Panc1 (cell line): ENCODE measurements at regions of chr9 and their contacts with region 1.

Region 1: DNA sequence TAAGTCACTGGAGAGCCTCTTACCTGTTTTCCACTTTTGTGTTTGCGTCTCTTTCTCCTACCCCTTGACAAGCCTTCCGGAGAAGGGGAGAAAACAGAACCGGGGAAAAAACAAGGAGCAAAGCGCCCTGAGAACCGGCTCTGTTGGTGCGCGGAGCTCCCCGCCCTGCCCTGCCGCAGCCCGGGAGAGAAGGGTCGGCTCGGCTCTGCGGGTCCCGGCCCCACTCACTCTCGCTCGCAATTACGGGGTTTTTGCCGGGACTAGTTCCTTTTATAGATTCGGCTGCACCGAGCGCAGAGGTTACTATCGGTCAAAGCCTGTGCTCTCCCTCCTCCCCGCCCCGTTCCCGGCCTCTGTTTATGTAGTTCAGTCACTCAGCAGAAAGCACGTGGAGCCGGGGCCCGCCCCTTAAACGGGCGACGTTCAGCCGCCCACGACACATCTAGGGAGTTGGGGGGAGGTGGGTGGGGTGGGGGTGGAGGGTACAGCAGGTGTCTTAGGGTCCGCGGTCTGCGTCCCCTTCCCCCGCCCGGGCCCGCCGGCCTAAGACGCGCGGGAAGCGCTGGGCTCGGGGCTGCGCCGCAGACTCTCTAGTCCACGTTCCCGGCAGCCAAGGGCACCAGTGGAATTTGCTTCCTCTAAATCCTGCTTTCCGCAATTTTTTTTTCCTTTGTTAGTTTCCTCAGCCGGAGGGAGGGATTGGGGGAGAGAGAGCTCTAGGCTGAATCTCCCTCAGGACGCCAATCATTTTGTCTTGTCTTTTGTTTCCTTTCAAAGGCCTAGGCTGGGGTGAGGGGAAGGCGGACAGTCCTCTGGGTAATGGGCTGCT is at the start of gene ABCA1:
- DNase-seq: no peak
- ATAC-seq: peak; percentile 76
- H3K4me3 ChIP-seq: peak within 1 kb of the TSS; percentile 52 to 85
- H3K27ac ChIP-seq: no peak within 1 kb of the TSS
- H3K4me1 ChIP-seq: no peaks in the 10 kb centered on the region
- H3K27me3 ChIP-seq: no peaks in the 10 kb centered on the region
- CTCF ChIP-seq: no peak
- total RNA-seq, gene ABCA1: 2.6 TPM

Region 2: GRCh38 chr9:104765138-104765537 is 163.0 kb before region 1 on chr9:
- CTCF ChIA-PET with region 1: no interaction called
- POLR2A ChIA-PET with region 1: no interaction called
- in situ Hi-C with region 1: no loop called
- intact Hi-C with region 1: no loop called
- DNase-seq: no peak
- ATAC-seq: no peak
- H3K4me3 ChIP-seq: no peak overlapping the region
- H3K27ac ChIP-seq: no peak overlapping the region
- H3K4me1 ChIP-seq: no peaks in the 10 kb centered on the region
- H3K27me3 ChIP-seq: no peaks in the 10 kb centered on the region
- CTCF ChIP-seq: no peak

Region 3: GRCh38 chr9:104784098-104784497 is 144.0 kb before region 1 on chr9:
- CTCF ChIA-PET with region 1: no interaction called
- POLR2A ChIA-PET with region 1: no interaction called
- in situ Hi-C with region 1: no loop called
- intact Hi-C with region 1: no loop called
- DNase-seq: no peak
- ATAC-seq: no peak
- H3K4me3 ChIP-seq: no peak overlapping the region
- H3K27ac ChIP-seq: no peak overlapping the region
- H3K4me1 ChIP-seq: no peaks in the 10 kb centered on the region
- H3K27me3 ChIP-seq: no peaks in the 10 kb centered on the region
- CTCF ChIP-seq: no peak

Region 4: GRCh38 chr9:104868687-104869404 is 59.3 kb before region 1 on chr9:
- CTCF ChIA-PET with region 1: interaction called, 12 read pairs
- POLR2A ChIA-PET with region 1: no interaction called
- in situ Hi-C with region 1: no loop called
- intact Hi-C with region 1: no loop called
- DNase-seq: no peak
- ATAC-seq: peak; percentile 56; the same call in 1 of the 2 replicates
- H3K4me3 ChIP-seq: no peak overlapping the region
- H3K27ac ChIP-seq: no peak overlapping the region
- H3K4me1 ChIP-seq: no peaks in the 10 kb centered on the region
- H3K27me3 ChIP-seq: no peaks in the 10 kb centered on the region
- CTCF ChIP-seq: no peak

Region 5: GRCh38 chr9:105150991-105151685 is 223.0 kb after region 1 on chr9:
- CTCF ChIA-PET with region 1: interaction called, 10 read pairs
- POLR2A ChIA-PET with region 1: no interaction called
- in situ Hi-C with region 1: no loop called
- intact Hi-C with region 1: loop called (anchors 2 kb)
- DNase-seq: no peak
- ATAC-seq: no peak
- H3K4me3 ChIP-seq: no peak overlapping the region
- H3K27ac ChIP-seq: no peak overlapping the region
- H3K4me1 ChIP-seq: no peaks in the 10 kb centered on the region
- H3K27me3 ChIP-seq: no peaks in the 10 kb centered on the region
- CTCF ChIP-seq: no peak

Region 6: GRCh38 chr9:105157130-105157583 is 229.0 kb after region 1 on chr9:
- CTCF ChIA-PET with region 1: no interaction called
- POLR2A ChIA-PET with region 1: no interaction called
- in situ Hi-C with region 1: no loop called
- intact Hi-C with region 1: loop called (anchors 2 kb)
- DNase-seq: no peak
- ATAC-seq: peak; percentile 91
- H3K4me3 ChIP-seq: no peak overlapping the region
- H3K27ac ChIP-seq: no peak overlapping the region
- H3K4me1 ChIP-seq: no peaks in the 10 kb centered on the region
- H3K27me3 ChIP-seq: no peaks in the 10 kb centered on the region
- CTCF ChIP-seq: peak; percentile 53